Activated CD4-positive, alpha-beta T cell treated with anti-CD3 and anti-CD28 coated beads, Interleukin-2, amount 10 ng/mL, durations not matched to agents 24 days and 14 days (primary cell): ENCODE measurements at regions of chr4 and their contacts with region 1.

Region 1: GRCh38 chr4:75698162-75698962 is 25.2 kb upstream of the G3BP2 start:
- DNase-seq: peak; percentile 71
- H3K4me3 Mint-ChIP-seq: peak overlapping the region; percentile 27
- H3K27ac Mint-ChIP-seq: peak overlapping the region; percentile 80
- H3K4me1 Mint-ChIP-seq: peaks cover 27% of the 10 kb centered on the region
- H3K27me3 Mint-ChIP-seq: no peaks in the 10 kb centered on the region

Region 2: DNA sequence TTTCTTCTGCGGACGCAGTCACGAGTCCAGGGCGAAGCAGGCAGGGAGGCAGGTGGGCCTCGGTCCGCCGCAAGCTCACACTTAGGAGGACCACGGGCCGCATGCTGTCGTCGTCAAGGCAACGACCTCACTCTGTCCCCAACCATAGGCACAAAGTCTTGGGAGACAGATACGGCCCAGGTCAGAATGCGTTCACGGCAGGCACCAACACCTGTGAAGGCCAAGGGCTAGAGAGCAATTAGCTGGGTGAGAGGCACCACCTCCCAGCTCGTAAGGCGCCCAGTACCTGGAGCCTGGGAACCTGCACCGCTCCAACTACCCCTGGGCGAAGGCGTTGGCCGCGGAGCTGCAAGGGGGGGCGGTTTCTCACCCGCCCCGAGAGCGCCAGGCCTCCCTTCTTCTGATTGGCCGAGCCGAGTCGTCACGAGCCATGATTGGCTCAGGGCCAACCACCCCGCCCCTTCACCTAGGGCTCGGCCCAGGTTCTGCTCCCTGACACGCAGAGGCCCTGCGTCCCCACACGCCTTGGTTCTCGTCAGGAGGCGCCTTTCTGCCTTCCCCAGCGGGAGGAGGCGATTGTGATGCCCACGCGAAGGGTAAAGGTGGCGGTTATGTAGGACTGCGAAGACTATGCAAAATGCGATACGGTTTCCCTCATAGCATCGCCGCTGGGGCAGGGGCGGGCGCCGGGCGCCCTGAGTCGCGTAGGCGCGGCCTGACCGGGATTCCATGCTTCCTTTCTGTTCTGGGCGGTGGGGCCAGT is 68.0 kb before region 1 on chr4 and contains the start of gene CDKL2:
- intact Hi-C with region 1: loop called (anchors 5 kb)
- DNase-seq: peak; percentile 97
- H3K4me3 Mint-ChIP-seq: peak within 1 kb of the TSS; percentile 84
- H3K27ac Mint-ChIP-seq: peak within 1 kb of the TSS; percentile 43
- H3K4me1 Mint-ChIP-seq: peaks cover 16% of the 10 kb centered on the region
- H3K27me3 Mint-ChIP-seq: peaks cover 4% of the 10 kb centered on the region
- total RNA-seq, gene CDKL2: 0.36 TPM in 1 of 2 replicates, not detected in the other

Region 3: GRCh38 chr4:75683482-75684155 is 14.7 kb before region 1 on chr4:
- intact Hi-C with region 1: loop called (anchors 2 kb)
- DNase-seq: no peak
- H3K4me3 Mint-ChIP-seq: no peak overlapping the region
- H3K27ac Mint-ChIP-seq: peak overlapping the region; percentile 17
- H3K4me1 Mint-ChIP-seq: peaks cover 26% of the 10 kb centered on the region
- H3K27me3 Mint-ChIP-seq: no peaks in the 10 kb centered on the region

Region 4: GRCh38 chr4:76141241-76141640 is 442.9 kb after region 1 on chr4:
- intact Hi-C with region 1: no loop called
- DNase-seq: no peak
- H3K4me3 Mint-ChIP-seq: no peak overlapping the region
- H3K27ac Mint-ChIP-seq: no peak overlapping the region
- H3K4me1 Mint-ChIP-seq: peaks cover 19% of the 10 kb centered on the region
- H3K27me3 Mint-ChIP-seq: no peaks in the 10 kb centered on the region